HEK293T (cell line): ENCODE measurements at regions of chr4 and their contacts with region 1.

Region 1: DNA sequence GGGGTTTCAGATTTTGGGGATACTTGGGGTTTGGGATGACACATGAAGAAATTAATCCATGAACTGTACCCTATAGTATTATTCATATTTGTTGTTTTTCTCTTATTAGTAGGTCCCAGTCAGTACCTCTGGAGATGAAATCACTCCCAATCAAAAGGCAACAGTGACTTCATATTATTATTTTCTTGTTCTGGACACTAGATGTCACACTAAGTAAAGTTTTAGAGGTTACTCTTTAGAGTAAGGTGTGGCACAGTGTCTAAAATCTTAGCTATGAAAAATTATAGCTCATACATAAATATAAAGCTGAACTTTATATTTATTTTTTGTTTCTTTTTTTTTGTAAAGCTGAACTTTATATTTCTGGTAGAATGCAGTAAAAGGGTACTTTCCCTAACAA is 35.1 kb downstream of the FAM114A1 start:
- DNase-seq: peak; percentile 13

Region 2: DNA sequence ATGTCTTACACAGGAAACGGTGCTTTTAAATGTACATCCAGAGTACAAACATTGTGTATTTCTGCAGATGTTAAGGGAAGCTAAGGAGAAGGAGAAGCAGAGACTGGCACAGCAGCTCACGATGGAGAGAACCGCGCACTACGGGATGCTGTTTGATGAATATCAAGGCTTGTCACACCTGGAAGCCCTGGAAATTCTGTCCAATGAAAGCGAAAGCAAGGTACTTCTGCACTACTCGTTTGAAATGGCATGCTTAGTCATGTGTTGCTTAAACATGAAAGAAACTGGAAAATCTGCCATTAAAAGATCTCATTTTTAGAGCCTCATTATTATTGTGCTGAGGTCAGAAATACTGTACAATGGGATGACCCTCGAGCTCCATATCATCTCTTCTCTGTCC is 12.2 kb after region 1 on chr4:
- CTCF ChIA-PET with region 1: no interaction called
- POLR2A ChIA-PET with region 1: no interaction called
- DNase-seq: no peak

Region 3: GRCh38 chr4:38930204-38930603 is 27.5 kb after region 1 on chr4:
- CTCF ChIA-PET with region 1: no interaction called
- POLR2A ChIA-PET with region 1: no interaction called
- DNase-seq: no peak

Region 4: GRCh38 chr4:39134683-39135319 is 232.1 kb after region 1 on chr4:
- CTCF ChIA-PET with region 1: interaction called, 19 read pairs
- POLR2A ChIA-PET with region 1: no interaction called
- DNase-seq: no peak